Gastrocnemius medialis (tissue), 4 donors: ENCODE measurements at regions of chr17 and their contacts with region 1.

Region 1: GRCh38 chr17:700504-701094 is 14.0 kb downstream of the VPS53 start:
- DNase-seq: no peak
- ATAC-seq: peak; percentile 54 to 56
- H3K4me3 ChIP-seq: no peak overlapping the region
- H3K27ac ChIP-seq: no peak overlapping the region
- H3K4me1 ChIP-seq: peaks cover under 1 to 5% of the 10 kb centered on the region in 2 donors
- H3K27me3 ChIP-seq: no peaks in the 10 kb centered on the region
- CTCF ChIP-seq: peak; percentile 62 to 82 (median 68)
- POLR2A ChIP-seq: no peak

Region 2: DNA sequence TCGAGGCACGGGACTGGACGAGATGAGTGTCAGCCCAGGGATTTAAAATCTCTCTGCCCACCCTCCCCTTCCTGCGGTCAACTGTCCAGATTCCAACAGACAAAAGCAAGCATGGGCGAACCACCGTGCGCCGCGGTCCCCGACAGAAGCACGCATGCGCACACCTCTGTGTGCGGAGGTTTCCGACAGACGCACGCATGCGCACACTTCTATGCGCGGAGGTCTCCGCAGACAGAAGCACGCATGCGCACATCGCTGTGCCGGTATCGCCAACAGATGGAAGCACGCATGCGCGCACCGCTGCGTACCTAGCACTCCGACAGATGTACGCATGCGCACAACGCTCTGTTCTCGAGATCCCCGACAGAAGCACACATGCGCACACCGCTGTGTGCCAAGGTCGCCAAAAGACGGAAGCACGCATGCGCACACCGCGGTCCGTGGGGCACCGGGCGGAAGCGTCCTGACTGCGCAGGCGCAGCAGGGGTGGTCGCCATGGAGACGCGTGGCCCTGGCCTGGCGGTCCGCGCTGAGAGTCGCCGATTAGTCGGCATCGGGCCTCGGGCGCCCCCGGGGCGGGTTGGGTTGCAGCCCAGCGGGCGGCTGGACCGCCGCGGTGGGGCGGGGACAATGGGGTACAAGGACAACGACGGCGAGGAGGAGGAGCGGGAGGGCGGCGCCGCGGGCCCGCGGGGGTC is 290.6 kb before region 1 on chr17:
- in situ Hi-C with region 1: no loop called
- intact Hi-C with region 1: loop called (anchors 1 kb)
- DNase-seq: peak; percentile 99
- ATAC-seq: peak; percentile 97 to 98
- H3K4me3 ChIP-seq: peak overlapping the region; percentile 70 to 94 (median 82)
- H3K27ac ChIP-seq: peak overlapping the region; percentile 70 to 80 (median 72)
- H3K4me1 ChIP-seq: peaks cover 13 to 14% of the 10 kb centered on the region in 2 donors
- H3K27me3 ChIP-seq: no peaks in the 10 kb centered on the region
- CTCF ChIP-seq: no peak
- POLR2A ChIP-seq: peak in 1 of 2 donors; percentile 49